ENCODE measurements at regions of chr11 and their contacts with region 1.

Region 1: GRCh38 chr11:61161190-61162091 is at the start of gene VPS37C:
- DNase-seq: peak; percentile 96
- ATAC-seq: peak; percentile 81
- H3K4me3 Mint-ChIP-seq: peak within 1 kb of the TSS; percentile 91
- H3K27ac Mint-ChIP-seq: peak within 1 kb of the TSS; percentile 95
- H3K4me1 Mint-ChIP-seq: peaks cover 62% of the 10 kb centered on the region
- H3K27me3 Mint-ChIP-seq: no peaks in the 10 kb centered on the region
- total RNA-seq, gene VPS37C: 9.5 to 10.6 TPM

Region 2: DNA sequence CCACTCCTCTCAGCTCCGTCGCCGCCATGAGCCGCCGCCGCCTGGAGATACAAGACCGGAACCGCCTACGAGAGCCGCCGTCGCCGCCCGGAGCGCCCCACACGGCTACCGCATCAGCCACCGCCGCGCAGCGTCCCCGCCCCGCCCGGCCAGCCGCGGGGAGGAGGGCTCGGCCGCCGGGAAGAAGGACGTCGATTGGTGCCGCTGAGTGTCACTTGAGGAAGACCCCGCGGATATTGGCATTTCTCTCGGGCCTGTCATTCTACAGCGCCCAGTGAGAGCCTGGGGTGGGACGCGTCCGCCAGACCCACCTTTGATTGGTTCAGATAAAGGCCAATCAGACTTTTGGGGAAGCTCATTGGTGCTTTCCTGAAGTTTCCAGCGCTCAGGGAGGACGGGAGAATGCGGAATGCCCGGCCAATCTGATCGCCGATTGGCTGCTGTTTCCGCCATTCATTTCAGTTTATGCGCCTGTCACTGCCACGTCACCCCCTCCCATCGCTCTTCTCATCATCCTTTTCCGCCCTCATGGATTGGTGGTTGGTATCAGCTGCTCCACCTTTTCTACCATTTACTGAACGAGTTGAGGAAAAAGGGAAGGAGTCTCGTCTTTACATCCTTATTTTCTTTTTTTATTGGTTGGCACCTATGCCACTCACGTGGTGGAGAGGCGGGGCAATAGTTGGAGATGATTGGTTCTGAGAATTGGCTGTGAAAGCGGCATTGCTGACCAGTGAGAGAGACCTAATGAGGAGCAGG is 1545.6 kb before region 1 on chr11 and contains the start of gene OSBP:
- CTCF ChIA-PET with region 1: no interaction called
- POLR2A ChIA-PET with region 1: no interaction called
- intact Hi-C with region 1: loop called in 1 of 2 experiments (anchors 10 kb)
- DNase-seq: peak; percentile 98
- ATAC-seq: peak; percentile 88
- H3K4me3 Mint-ChIP-seq: peak within 1 kb of the TSS; percentile 99
- H3K27ac Mint-ChIP-seq: peak within 1 kb of the TSS; percentile 96
- H3K4me1 Mint-ChIP-seq: peaks cover 40% of the 10 kb centered on the region
- H3K27me3 Mint-ChIP-seq: no peaks in the 10 kb centered on the region
- total RNA-seq, gene OSBP: 37.9 to 44.2 TPM

Region 3: GRCh38 chr11:60913793-60914632 is 247.4 kb before region 1 on chr11 and contains the start of gene TMEM109:
- CTCF ChIA-PET with region 1: no interaction called
- POLR2A ChIA-PET with region 1: no interaction called
- intact Hi-C with region 1: loop called in 1 of 2 experiments (anchors 1 kb)
- DNase-seq: peak; percentile 93
- ATAC-seq: peak; percentile 78
- H3K4me3 Mint-ChIP-seq: peak within 1 kb of the TSS; percentile 87
- H3K27ac Mint-ChIP-seq: peak within 1 kb of the TSS; percentile 97
- H3K4me1 Mint-ChIP-seq: peaks cover 58% of the 10 kb centered on the region
- H3K27me3 Mint-ChIP-seq: no peaks in the 10 kb centered on the region
- total RNA-seq, gene TMEM109: 80.3 to 89.1 TPM

Region 4: DNA sequence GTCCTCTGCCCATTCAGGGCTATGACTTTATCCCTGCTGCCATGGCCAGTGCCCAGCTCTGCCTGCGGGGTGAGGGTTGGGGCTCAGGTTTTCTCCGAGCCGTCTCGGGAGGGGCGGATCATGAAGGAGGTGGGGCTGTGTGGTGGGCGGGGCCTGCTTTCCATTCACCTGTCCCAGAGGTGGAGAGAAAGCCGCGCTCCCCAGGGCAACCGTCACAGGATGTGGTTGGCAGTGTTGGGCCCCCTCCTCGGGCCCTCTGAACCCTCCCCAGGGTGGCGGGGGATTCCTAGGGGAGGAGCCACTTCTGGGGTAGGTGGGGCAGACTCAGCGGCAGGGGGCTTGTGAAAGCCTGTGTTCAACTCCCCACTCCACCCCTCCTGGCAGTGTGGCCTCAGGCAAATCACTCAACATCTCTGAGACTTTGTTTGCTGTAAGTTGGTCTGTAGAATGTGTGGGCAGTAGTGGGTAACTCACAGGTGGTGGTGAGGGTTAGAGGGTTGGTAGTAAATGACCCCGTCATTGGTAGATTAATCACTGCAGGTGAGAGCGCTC is 139.7 kb before region 1 on chr11:
- CTCF ChIA-PET with region 1: interaction called, 4 read pairs
- POLR2A ChIA-PET with region 1: no interaction called
- intact Hi-C with region 1: loop called in 1 of 2 experiments (anchors 1 kb)
- DNase-seq: peak; percentile 94
- ATAC-seq: peak; percentile 50
- H3K4me3 Mint-ChIP-seq: peak overlapping the region; percentile 79
- H3K27ac Mint-ChIP-seq: peak overlapping the region; percentile 97
- H3K4me1 Mint-ChIP-seq: peaks cover 92% of the 10 kb centered on the region
- H3K27me3 Mint-ChIP-seq: no peaks in the 10 kb centered on the region

Region 5: GRCh38 chr11:61083601-61084147 is 77.8 kb before region 1 on chr11:
- CTCF ChIA-PET with region 1: interaction called, 5 read pairs
- POLR2A ChIA-PET with region 1: no interaction called
- intact Hi-C with region 1: loop called (anchors 2 to 5 kb)
- DNase-seq: peak; percentile 86
- ATAC-seq: peak; percentile 66
- H3K4me3 Mint-ChIP-seq: peak overlapping the region; percentile 87
- H3K27ac Mint-ChIP-seq: peak overlapping the region; percentile 99
- H3K4me1 Mint-ChIP-seq: peaks cover 64% of the 10 kb centered on the region
- H3K27me3 Mint-ChIP-seq: no peaks in the 10 kb centered on the region

Region 6: DNA sequence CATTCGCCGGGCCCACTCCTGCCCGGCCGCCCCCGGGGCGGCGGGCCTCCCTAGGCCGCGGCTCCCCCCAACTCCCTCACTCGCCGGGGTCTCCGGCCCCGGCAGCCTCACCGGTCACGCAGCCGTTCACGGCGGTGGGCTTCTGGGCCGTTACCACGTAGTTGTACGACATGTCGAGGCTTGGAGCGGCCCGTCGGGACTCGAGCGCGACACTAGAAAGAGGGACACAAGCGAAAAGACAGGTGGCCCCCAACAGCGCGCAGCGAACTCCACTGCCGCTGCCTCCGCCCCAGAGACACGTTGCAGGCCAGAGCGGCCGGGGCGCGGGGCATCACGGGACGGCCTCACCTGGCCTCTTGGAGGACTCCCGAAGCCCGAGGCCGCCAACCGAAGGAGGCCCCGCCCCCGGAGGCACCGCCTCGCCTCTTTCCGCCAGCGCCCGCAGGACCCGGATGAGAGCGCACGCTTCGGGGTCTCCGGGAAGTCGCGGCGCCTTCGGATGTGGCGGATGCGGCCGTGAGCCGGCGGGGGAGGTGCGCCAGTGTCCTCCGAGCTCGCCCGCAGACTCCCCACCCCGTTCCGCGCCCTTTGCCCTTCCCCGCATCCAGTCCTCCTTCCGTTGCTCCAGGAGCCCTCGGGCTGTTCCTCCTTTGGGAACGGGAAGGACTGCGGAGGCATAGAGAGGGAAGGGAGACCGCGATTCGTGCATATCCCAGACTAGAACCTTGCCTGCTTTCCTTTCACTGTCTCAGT is 171.5 kb after region 1 on chr11 and contains the starts of genes DDB1 and TKFC:
- CTCF ChIA-PET with region 1: no interaction called
- POLR2A ChIA-PET with region 1: interaction called, 3 read pairs
- intact Hi-C with region 1: loop called in 1 of 2 experiments (anchors 1 kb)
- DNase-seq: peak; percentile 99
- ATAC-seq: peak; percentile 94
- H3K4me3 Mint-ChIP-seq: peak within 1 kb of the TSS; percentile 97
- H3K27ac Mint-ChIP-seq: peak within 1 kb of the TSS; percentile 100
- H3K4me1 Mint-ChIP-seq: peaks cover 64% of the 10 kb centered on the region
- H3K27me3 Mint-ChIP-seq: no peaks in the 10 kb centered on the region
- total RNA-seq, gene DDB1: 258 to 268 TPM
- total RNA-seq, gene TKFC: 100 to 107 TPM

Region 7: DNA sequence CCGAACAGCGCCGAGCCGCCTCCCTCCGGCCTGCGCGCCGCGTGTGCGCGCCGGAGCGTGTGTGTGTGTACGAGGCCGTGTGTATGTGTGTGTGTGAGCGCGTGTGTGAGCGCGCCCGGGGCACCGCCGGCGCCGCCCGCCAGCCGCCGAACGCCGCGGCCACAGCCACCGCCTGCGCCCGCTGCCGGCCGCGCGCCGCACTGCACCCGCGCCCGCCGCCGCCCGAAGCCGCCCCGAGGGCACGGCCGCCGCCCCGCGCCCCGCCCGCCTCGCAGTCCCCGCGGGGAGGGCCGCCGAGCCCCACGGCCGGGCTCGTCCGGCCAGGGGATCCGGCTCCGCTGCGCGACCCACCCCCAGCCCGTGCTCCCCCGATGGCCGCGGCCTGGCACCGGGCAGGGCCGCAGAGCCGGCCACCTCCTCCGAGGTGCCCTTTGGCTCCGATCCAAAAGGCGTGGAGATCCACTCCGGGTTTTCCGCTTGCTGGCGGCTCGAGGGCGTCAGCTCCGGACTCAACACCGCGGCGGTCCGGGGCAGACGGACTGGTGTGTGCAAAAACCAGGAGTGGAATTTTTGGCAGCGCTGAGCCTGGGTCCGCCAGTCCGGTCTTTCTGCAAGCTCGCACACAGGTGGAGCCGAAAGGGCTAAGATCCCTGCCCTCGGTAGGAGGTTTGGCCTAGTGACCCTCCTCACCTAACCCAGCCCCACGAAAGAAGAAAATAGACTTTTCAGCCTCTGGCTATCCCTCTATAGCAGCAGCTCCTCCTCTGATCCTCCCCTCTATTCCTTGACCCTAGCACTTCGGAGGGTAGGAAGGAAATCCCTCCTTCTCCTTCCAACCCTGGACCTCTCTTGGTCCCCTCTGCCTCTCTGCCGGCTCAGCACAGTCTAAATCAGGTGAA is 419.8 kb after region 1 on chr11 and contains the start of gene SYT7:
- CTCF ChIA-PET with region 1: no interaction called
- POLR2A ChIA-PET with region 1: no interaction called
- intact Hi-C with region 1: loop called in 1 of 2 experiments (anchors 5 kb)
- DNase-seq: peak; percentile 97
- ATAC-seq: peak; percentile 91
- H3K4me3 Mint-ChIP-seq: peak within 1 kb of the TSS; percentile 64
- H3K27ac Mint-ChIP-seq: no peak within 1 kb of the TSS
- H3K4me1 Mint-ChIP-seq: peaks cover 12% of the 10 kb centered on the region
- H3K27me3 Mint-ChIP-seq: peaks cover 35% of the 10 kb centered on the region
- total RNA-seq, gene SYT7: 0.04 TPM in 1 of 2 experiments, not detected in the other